Endothelial cell of umbilical vein (primary cell): ENCODE measurements at regions of chr9 and their contacts with region 1.

Region 1: GRCh38 chr9:75890472-75891276 is at the start of gene PCSK5:
- DNase-seq: peak; percentile 94
- H3K4me3 ChIP-seq: peak within 1 kb of the TSS; percentile 66 to 90 (median 87)
- H3K27ac ChIP-seq: peak within 1 kb of the TSS; percentile 39
- H3K4me1 ChIP-seq: peaks cover 18% of the 10 kb centered on the region
- H3K27me3 ChIP-seq: peaks cover 0 to 6% of the 10 kb centered on the region in 2 experiments
- CTCF ChIP-seq: peak; percentile 7 to 41
- POLR2A ChIP-seq: peak; percentile 71
- total RNA-seq, gene PCSK5: 4.8 and 5.1 TPM in 2 replicates

Region 2: DNA sequence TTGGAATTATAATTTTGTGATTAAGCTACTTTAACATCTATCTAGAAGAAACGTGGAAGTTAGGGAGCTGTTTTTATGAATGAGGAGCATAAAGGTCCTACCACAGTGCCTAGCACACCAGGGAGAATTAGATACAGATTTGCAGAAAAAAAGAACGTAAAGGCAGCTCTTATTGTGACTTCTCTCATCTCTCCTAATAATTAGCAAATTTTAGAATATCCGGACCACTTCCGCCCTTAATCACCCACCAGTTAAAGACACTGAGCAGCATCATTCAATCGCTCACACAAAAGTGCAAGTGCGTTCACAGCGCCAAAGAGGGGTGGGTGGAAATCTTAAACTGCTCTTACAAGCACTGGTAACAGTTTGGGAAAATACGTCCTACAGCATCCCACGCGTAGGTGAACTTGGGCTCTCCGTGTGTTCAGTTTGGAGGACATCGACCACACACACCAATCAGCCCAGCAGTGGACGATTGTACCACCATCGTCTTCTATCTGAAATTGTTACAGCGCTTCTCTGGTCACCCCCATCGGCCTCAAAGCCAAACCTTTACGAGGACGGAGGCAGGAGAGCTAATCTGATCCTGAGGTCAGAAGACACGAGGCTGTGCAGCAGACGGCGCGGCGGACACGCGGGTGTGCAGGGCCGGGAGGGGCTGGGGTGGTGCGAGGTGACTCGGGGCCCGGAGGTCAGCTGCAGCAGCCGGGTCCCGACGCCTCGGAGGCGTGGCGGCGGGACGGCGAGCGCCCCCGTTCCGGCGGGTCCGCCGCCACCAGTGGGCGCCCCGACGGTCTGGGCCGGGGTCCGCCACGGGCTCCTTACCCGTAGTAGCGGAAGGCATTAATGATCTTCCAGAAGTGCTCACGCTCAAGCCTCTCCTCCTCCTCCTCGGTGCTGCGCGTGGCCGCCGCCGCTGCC is 863.2 kb before region 1 on chr9:
- CTCF ChIA-PET with region 1: no interaction called
- POLR2A ChIA-PET with region 1: no interaction called
- dilution Hi-C with region 1: no loop called
- intact Hi-C with region 1: loop called (anchors 10 kb)
- DNase-seq: peak; percentile 53
- H3K4me3 ChIP-seq: peak overlapping the region; percentile 15 to 68 (median 61)
- H3K27ac ChIP-seq: peak overlapping the region; percentile 43
- H3K4me1 ChIP-seq: peaks cover 9% of the 10 kb centered on the region
- H3K27me3 ChIP-seq: peaks cover 1 to 2% of the 10 kb centered on the region in 2 experiments
- CTCF ChIP-seq: peak in 1 of 2 donors; percentile 21
- POLR2A ChIP-seq: peak; percentile 10

Region 3: DNA sequence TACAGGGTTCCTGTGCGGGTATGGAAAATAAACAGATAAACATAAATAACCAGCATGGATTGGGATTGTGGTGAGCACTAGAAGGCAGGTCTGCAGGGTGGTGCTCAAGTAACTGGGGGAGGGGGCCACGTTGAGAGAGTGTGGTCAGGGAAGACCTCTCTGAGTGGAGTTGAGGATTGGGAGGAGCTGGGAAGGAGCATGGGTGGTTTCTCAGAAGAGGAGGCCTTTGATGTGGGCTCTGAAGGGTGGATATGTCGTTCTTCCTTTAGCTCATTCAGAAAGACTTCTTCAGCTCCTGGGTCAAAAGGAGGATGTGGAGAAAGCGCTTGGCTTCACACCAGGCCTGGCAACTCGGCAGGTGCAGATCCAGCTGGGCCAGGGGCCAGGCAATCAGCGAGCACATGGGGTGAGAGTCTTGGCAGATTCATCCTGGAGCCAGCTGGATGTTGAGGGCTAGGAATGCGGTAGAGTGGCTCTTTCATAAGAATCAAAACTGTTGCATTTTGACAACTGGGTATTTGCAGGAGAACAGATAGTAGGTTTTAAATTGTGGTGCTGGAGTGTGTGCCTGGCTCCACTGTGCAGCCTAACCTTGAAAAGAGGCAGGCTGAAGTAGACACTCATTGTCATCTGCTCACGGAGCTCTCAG is 71.5 kb after region 1 on chr9:
- CTCF ChIA-PET with region 1: no interaction called
- POLR2A ChIA-PET with region 1: no interaction called
- dilution Hi-C with region 1: no loop called
- intact Hi-C with region 1: no loop called
- DNase-seq: no peak
- H3K4me3 ChIP-seq: no peak overlapping the region
- H3K27ac ChIP-seq: no peak overlapping the region
- H3K4me1 ChIP-seq: no peaks in the 10 kb centered on the region
- H3K27me3 ChIP-seq: no peaks in the 10 kb centered on the region
- CTCF ChIP-seq: no peak
- POLR2A ChIP-seq: no peak

Region 4: GRCh38 chr9:75985515-75985914 is 94.8 kb after region 1 on chr9:
- CTCF ChIA-PET with region 1: no interaction called
- POLR2A ChIA-PET with region 1: no interaction called
- dilution Hi-C with region 1: no loop called
- intact Hi-C with region 1: no loop called
- DNase-seq: no peak
- H3K4me3 ChIP-seq: no peak overlapping the region
- H3K27ac ChIP-seq: no peak overlapping the region
- H3K4me1 ChIP-seq: no peaks in the 10 kb centered on the region
- H3K27me3 ChIP-seq: no peaks in the 10 kb centered on the region
- CTCF ChIP-seq: no peak
- POLR2A ChIP-seq: no peak

Region 5: GRCh38 chr9:76077537-76077936 is 186.9 kb after region 1 on chr9:
- CTCF ChIA-PET with region 1: no interaction called
- POLR2A ChIA-PET with region 1: no interaction called
- dilution Hi-C with region 1: no loop called
- intact Hi-C with region 1: no loop called
- DNase-seq: no peak
- H3K4me3 ChIP-seq: no peak overlapping the region
- H3K27ac ChIP-seq: no peak overlapping the region
- H3K4me1 ChIP-seq: no peaks in the 10 kb centered on the region
- H3K27me3 ChIP-seq: no peaks in the 10 kb centered on the region
- CTCF ChIP-seq: no peak
- POLR2A ChIP-seq: no peak

Region 6: DNA sequence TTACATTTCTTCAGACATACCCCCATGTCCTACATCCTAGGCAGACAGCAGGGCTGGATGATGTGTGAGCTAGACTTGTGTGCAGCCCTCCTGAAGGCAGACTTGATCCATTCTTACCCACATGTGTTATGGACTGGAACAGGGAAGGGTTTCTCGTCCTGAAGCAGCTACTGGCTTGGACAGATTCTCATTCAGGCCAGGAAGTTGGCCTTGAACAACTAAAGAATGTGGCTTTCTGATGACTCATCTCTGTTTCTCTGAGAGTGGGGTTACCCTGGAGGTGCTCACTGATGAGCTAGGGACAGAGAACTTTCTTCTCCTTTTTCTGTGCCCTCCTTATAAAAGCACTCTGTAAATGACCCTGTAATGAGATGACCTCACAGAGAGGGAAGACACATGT is 246.3 kb after region 1 on chr9:
- CTCF ChIA-PET with region 1: no interaction called
- POLR2A ChIA-PET with region 1: no interaction called
- dilution Hi-C with region 1: no loop called
- intact Hi-C with region 1: no loop called
- DNase-seq: peak; percentile 40
- H3K4me3 ChIP-seq: no peak overlapping the region
- H3K27ac ChIP-seq: no peak overlapping the region
- H3K4me1 ChIP-seq: no peaks in the 10 kb centered on the region
- H3K27me3 ChIP-seq: no peaks in the 10 kb centered on the region
- CTCF ChIP-seq: no peak
- POLR2A ChIP-seq: no peak

Region 7: DNA sequence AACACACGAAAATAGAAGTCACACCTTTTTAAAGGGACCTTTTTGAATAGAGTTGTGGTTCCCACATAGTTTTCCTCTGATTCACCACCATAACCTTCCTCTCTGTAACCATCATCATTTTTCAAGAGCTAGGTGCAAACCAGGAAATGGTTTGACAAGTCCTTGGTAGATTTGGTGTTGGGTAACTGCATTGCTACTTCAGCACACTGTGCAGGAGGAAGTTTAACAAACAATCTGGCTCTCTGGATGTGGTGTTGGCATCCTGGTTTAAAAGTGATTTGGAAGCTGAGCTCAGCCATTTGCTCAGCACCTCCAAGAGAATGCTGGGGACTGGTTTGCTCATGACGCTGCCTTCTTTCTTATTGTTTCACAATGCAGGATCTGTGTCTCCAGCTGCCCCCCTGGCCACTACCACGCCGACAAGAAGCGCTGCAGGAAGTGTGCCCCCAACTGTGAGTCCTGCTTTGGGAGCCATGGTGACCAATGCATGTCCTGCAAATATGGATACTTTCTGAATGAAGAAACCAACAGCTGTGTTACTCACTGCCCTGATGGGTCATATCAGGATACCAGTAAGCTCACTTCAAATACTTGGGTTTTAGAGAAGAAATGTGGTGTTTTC is 290.5 kb after region 1 on chr9:
- CTCF ChIA-PET with region 1: no interaction called
- POLR2A ChIA-PET with region 1: no interaction called
- dilution Hi-C with region 1: no loop called
- intact Hi-C with region 1: loop called (anchors 10 kb)
- DNase-seq: no peak
- H3K4me3 ChIP-seq: no peak overlapping the region
- H3K27ac ChIP-seq: no peak overlapping the region
- H3K4me1 ChIP-seq: no peaks in the 10 kb centered on the region
- H3K27me3 ChIP-seq: no peaks in the 10 kb centered on the region
- CTCF ChIP-seq: no peak
- POLR2A ChIP-seq: no peak

Region 8: DNA sequence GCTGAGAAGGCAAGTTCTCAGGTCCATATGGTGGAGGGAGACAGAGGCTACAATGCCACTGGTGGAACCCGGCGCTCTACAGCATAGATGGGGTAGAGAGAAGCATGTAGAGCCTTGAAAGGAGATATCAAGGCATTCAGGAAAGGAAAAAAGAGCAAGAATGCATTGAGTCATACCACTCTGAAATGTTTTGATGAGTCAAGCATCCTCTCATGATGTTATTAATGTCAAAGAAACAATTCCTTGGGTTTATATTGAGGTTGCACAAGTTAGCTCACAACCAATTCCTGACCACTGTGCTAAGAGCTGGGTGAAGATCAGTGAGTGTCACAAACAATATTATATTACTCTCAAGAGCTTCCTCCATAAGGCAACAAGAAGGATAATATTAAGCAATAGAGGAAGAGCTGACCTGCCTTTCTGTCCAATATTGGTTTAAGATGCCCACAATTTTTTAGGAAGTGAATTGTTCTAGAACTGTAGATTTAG is 325.5 kb after region 1 on chr9:
- CTCF ChIA-PET with region 1: interaction called, 3 read pairs
- POLR2A ChIA-PET with region 1: no interaction called
- dilution Hi-C with region 1: no loop called
- intact Hi-C with region 1: loop called (anchors 1 kb)
- DNase-seq: peak; percentile 84
- H3K4me3 ChIP-seq: no peak overlapping the region
- H3K27ac ChIP-seq: no peak overlapping the region
- H3K4me1 ChIP-seq: peaks cover 17% of the 10 kb centered on the region
- H3K27me3 ChIP-seq: peaks cover 16 to 39% of the 10 kb centered on the region in 2 experiments
- CTCF ChIP-seq: no peak
- POLR2A ChIP-seq: no peak

Region 9: DNA sequence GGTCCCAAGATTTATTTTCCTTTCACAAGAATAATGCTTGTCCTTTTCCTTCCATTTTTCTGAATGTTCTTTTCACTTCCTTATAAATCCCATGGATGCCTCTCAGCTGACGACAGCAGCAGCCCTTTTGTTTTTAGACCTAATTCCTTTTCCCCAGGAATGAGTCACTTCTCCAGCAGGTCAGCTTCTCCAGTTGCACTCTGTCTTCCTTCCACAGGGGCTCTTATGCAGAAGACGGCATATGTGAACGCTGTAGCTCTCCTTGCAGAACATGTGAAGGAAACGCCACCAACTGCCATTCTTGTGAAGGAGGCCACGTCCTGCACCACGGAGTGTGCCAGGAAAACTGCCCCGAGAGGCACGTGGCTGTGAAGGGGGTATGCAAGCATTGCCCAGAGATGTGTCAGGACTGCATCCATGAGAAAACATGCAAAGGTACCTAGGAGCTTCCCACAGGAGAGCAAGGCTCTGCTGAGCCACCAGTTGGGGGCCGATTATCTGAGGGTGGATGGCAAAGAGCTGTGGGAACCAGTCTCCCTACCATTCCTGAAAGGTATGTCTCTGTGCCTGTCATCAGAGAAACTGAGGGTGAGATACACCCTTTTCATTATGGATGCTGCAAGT is 430.6 kb after region 1 on chr9:
- CTCF ChIA-PET with region 1: interaction called, 3 read pairs
- POLR2A ChIA-PET with region 1: no interaction called
- dilution Hi-C with region 1: no loop called
- intact Hi-C with region 1: loop called (anchors 5 kb)
- DNase-seq: peak; percentile 87
- H3K4me3 ChIP-seq: no peak overlapping the region
- H3K27ac ChIP-seq: peak overlapping the region; percentile 63
- H3K4me1 ChIP-seq: peaks cover 8% of the 10 kb centered on the region
- H3K27me3 ChIP-seq: no peaks in the 10 kb centered on the region
- CTCF ChIP-seq: no peak
- POLR2A ChIP-seq: no peak

Region 10: GRCh38 chr9:76374702-76375559 is 484.3 kb after region 1 on chr9:
- CTCF ChIA-PET with region 1: no interaction called
- POLR2A ChIA-PET with region 1: no interaction called
- dilution Hi-C with region 1: no loop called
- intact Hi-C with region 1: loop called (anchors 1 kb)
- DNase-seq: peak; percentile 96
- H3K4me3 ChIP-seq: no peak overlapping the region
- H3K27ac ChIP-seq: peak overlapping the region; percentile 73
- H3K4me1 ChIP-seq: peaks cover 20% of the 10 kb centered on the region
- H3K27me3 ChIP-seq: no peaks in the 10 kb centered on the region
- CTCF ChIP-seq: no peak
- POLR2A ChIP-seq: no peak

Region 11: DNA sequence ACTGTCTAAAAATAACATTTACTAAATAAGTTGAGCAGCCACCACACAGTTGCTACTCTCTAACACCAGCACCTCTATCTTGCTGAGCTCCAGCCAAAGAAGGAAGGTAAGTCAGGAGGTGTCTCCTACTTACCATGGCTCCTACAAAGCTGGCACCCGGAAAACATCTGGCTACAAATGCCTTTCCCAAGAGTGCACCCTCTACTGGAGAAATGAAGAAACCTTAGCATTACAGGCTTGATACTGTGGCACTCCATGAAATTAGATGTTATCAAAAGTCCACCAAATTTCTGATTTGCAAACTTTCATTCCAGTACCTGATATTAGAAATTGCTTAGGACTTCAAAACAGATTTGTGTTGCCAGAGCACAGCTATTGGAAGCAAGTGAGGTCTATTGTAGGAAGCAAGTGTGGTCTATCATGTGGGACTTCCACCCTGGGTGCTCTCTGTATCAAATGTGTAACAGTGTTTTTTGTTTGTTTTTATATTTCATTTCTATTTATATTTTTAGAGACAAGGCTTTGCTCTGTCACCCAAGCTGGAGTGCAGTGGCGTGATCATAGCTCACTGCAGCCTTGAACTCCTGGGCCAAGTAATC is 529.2 kb after region 1 on chr9:
- CTCF ChIA-PET with region 1: no interaction called
- POLR2A ChIA-PET with region 1: no interaction called
- dilution Hi-C with region 1: no loop called
- intact Hi-C with region 1: loop called (anchors 5 kb)
- DNase-seq: peak; percentile 32
- H3K4me3 ChIP-seq: no peak overlapping the region
- H3K27ac ChIP-seq: no peak overlapping the region
- H3K4me1 ChIP-seq: peaks cover 16% of the 10 kb centered on the region
- H3K27me3 ChIP-seq: no peaks in the 10 kb centered on the region
- CTCF ChIP-seq: peak; percentile 45 to 50
- POLR2A ChIP-seq: no peak